MCF 10A (cell line): ENCODE measurements at regions of chr18 and their contacts with region 1.

Region 1: DNA sequence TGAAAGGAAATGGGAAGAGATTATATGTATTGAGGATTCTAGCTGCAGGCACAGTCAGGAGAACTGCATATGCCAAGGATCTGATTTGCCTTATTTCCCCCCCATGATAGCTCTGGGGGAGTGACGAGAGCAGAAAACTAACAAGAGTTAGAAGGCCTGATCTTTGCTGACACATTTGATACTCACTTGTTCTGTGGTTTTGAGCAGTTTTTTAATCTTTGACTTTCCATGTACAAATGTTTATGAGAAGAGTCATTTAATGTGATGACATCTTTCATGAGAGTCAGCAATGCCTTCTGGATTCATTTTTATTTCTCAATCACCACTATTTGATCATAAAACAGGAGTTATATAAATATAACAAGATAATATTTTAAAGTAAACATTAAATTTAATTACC is 12.7 kb upstream of the SERPINB7 start:
- DNase-seq: peak; percentile 64
- H3K4me3 Mint-ChIP-seq: no peak overlapping the region
- H3K27ac Mint-ChIP-seq: peak overlapping the region; percentile 10
- H3K4me1 Mint-ChIP-seq: peaks cover 15% of the 10 kb centered on the region
- H3K27me3 Mint-ChIP-seq: no peaks in the 10 kb centered on the region
- CTCF ChIP-seq: no peak

Region 2: DNA sequence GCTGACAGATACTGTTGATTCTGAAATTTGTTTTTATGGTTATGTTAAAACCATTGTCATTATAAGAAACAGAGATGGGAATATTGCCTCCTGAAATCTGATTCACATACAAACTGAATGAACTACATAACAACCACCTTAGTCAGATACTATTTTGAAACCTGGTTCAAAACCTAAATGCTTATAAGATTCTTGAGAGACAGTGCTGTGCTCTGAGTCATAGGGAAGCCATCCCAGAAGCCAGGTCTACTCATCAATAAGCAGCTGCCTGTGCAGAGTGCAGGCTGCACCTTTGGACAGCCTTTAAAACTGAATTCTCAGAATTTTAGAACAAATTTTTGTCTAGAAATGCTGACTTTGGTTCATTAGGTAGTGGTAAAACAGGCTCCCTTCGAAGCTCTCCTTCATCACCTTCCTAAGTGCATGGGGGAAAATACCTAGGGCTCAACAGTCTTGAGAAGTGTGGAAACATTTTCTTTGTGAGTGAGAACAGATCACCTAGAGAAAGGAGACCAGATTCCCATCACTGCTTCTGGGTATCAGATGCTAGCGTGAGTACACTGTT is 12.7 kb after region 1 on chr18 and contains the start of gene SERPINB7:
- CTCF ChIA-PET with region 1: no interaction called
- POLR2A ChIA-PET with region 1: interaction called, 65 read pairs
- intact Hi-C with region 1: no loop called
- DNase-seq: peak; percentile 80
- H3K4me3 Mint-ChIP-seq: peak within 1 kb of the TSS; percentile 24
- H3K27ac Mint-ChIP-seq: peak within 1 kb of the TSS; percentile 21
- H3K4me1 Mint-ChIP-seq: peaks cover 43% of the 10 kb centered on the region
- H3K27me3 Mint-ChIP-seq: no peaks in the 10 kb centered on the region
- CTCF ChIP-seq: no peak
- total RNA-seq, gene SERPINB7: 2.6 and 3.0 TPM in 2 replicates

Region 3: GRCh38 chr18:63831080-63831788 is 68.7 kb after region 1 on chr18:
- CTCF ChIA-PET with region 1: no interaction called
- POLR2A ChIA-PET with region 1: no interaction called
- intact Hi-C with region 1: loop called (anchors 5 kb)
- DNase-seq: peak; percentile 47
- H3K4me3 Mint-ChIP-seq: no peak overlapping the region
- H3K27ac Mint-ChIP-seq: peak overlapping the region; percentile 0
- H3K4me1 Mint-ChIP-seq: peaks cover 28% of the 10 kb centered on the region
- H3K27me3 Mint-ChIP-seq: no peaks in the 10 kb centered on the region
- CTCF ChIP-seq: no peak

Region 4: DNA sequence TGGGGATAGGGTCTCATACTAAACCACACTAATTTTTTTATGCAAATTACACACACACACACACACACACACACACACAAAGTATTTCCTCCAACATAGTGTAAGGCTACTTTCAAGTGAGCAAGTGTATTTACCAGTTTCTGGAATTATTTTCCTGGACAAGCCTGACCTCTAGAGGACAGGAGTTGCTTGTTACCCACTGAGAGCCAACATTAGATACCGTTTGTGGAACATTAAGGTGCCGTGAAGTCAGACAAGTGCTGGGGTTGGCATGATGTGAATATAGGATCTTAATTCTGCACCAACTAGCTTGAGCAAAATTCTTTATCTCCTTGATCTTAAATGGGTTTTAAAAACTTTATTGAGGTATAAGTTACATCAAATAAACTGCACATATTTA is 85.6 kb after region 1 on chr18:
- CTCF ChIA-PET with region 1: interaction called, 14 read pairs
- POLR2A ChIA-PET with region 1: no interaction called
- intact Hi-C with region 1: no loop called
- DNase-seq: peak; percentile 73
- H3K4me3 Mint-ChIP-seq: no peak overlapping the region
- H3K27ac Mint-ChIP-seq: no peak overlapping the region
- H3K4me1 Mint-ChIP-seq: no peaks in the 10 kb centered on the region
- H3K27me3 Mint-ChIP-seq: no peaks in the 10 kb centered on the region
- CTCF ChIP-seq: peak; percentile 64